ENCODE measurements at regions of chr22 and their contacts with region 1.

Region 1: GRCh38 chr22:23315341-23315917 is 135.1 kb downstream of the BCR start:
- DNase-seq: peak in 1 of 2 donors; percentile 73
- H3K4me3 ChIP-seq: no peak overlapping the region
- H3K27ac ChIP-seq: peak overlapping the region in 1 of 2 donors; percentile 33
- H3K4me1 ChIP-seq: no peaks in the 10 kb centered on the region
- H3K27me3 ChIP-seq: no peaks in the 10 kb centered on the region
- CTCF ChIP-seq: peak; percentile 53 to 72 (median 62)

Region 2: DNA sequence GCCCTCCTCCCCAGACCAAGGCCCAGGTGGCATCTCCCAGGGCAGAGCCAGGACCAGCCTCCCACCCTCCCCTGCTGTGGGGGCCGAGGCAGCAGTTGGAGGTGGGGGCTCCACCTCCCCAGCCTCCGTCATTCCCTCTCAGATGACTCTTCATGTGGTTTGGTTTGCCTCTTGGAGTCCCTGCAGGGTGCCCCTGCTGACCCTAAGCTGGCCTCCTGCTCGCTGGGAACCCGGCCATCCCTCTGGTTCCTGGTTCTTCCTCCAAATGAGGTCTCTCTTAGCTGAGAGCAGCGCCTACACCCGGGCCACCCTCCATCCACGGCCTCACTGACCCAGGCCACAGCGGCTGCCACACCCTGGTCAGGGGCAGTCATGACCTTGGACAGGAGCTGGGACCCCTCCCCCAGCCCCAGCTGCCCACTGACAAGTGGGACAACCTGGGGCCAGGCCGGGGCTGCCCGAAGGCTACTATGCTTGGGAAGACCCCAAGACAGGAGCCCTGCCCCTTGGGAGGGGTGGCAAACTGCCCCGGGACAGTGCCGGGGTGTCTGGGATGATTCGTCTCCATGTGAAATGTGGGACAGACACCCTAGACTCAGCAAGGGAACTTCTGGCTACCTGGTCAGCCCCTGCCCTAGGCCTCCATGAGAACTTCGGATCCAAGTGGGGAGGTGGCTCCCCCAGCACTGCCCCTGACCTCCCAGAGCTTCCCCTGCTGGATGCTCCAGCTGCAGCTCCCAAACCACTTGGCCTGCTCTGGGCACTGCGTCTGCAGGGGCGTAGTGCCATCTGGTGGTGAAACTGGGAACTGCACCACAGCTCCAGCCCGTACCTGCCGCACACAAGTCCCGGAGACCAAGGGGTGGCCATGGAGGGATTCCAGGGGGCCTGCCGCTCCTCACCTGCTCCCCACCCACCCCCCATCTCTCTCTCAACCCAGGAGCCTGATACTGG is 70.1 kb after region 1 on chr22:
- intact Hi-C with region 1: loop called (anchors 1 kb)
- DNase-seq: peak in 1 of 2 donors; percentile 84
- H3K4me3 ChIP-seq: no peak overlapping the region
- H3K27ac ChIP-seq: no peak overlapping the region
- H3K4me1 ChIP-seq: peaks cover 0 to 3% of the 10 kb centered on the region in 2 donors
- H3K27me3 ChIP-seq: no peaks in the 10 kb centered on the region
- CTCF ChIP-seq: peak; percentile 96 to 99 (median 97)